ENCODE measurements at regions of chr4 and their contacts with region 1.

Region 1: GRCh38 chr4:52028969-52029368 is 8.8 kb upstream of the LRRC66 start:
- DNase-seq: no peak
- ATAC-seq: no peak
- H3K4me3 ChIP-seq: no peak overlapping the region
- H3K27ac ChIP-seq: no peak overlapping the region
- H3K4me1 ChIP-seq: no peaks in the 10 kb centered on the region
- H3K27me3 ChIP-seq: no peaks in the 10 kb centered on the region
- CTCF ChIP-seq: no peak

Region 2: GRCh38 chr4:51895813-51896408 is 133.1 kb before region 1 on chr4:
- intact Hi-C with region 1: loop called in 1 of 2 experiments (anchors 10 kb)
- DNase-seq: peak in 3 of 4 donors; percentile 39 to 59 (median 42)
- ATAC-seq: peak; percentile 98
- H3K4me3 ChIP-seq: no peak overlapping the region
- H3K27ac ChIP-seq: no peak overlapping the region
- H3K4me1 ChIP-seq: no peaks in the 10 kb centered on the region
- H3K27me3 ChIP-seq: no peaks in the 10 kb centered on the region
- CTCF ChIP-seq: peak; percentile 74 to 77